ENCODE measurements at regions of chr7 and their contacts with region 1.

Region 1: DNA sequence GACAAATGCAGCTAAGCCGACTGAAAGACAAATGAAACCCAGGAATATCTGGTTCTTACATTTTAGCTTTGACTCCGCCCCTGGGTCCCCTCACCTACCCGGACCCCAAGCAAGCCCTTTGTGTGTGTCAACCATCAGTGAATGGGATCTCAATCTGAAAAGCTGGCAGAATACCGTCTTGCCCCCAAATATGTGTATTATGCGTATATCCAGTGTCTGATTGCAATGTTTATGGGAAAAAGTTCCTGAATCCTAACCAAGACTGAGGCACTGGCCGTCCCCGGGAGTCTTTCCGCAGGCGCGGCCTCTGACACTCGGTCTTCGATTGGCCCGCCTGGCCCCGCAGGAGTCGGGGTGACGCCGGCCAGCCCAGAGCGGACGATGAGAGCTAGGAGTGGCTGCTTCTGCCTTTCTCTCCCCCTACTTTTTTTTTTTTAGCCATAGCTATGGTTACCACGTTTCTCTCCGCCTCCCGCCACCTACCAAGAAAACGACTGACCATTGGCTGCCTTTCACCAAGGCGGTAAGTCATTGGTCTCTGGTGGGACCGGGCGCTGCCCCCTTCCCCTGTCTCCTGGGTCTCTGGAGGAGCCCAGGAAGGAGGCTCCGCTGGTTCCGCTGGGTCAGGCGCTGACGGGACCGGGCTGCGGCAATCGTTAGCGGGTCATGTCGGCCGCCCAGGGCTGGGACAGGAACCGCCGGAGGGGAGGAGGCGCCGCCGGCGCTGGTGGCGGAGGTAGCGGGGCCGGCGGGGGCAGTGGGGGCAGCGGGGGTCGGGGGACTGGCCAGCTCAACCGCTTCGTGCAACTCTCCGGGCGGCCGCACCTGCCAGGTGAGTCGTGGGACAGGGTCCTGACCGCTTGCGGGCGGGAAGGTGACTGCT is at the start of gene KLHDC10:
- DNase-seq: peak; percentile 99
- H3K4me3 ChIP-seq: peak within 1 kb of the TSS; percentile 68 to 94 (median 84)
- H3K27ac ChIP-seq: peak within 1 kb of the TSS; percentile 50
- H3K4me1 ChIP-seq: peaks cover 28% of the 10 kb centered on the region
- H3K27me3 ChIP-seq: no peaks in the 10 kb centered on the region
- CTCF ChIP-seq: no peak
- POLR2A ChIP-seq: peak; percentile 76
- total RNA-seq, gene KLHDC10: 28.6 and 31.3 TPM in 2 replicates

Region 2: DNA sequence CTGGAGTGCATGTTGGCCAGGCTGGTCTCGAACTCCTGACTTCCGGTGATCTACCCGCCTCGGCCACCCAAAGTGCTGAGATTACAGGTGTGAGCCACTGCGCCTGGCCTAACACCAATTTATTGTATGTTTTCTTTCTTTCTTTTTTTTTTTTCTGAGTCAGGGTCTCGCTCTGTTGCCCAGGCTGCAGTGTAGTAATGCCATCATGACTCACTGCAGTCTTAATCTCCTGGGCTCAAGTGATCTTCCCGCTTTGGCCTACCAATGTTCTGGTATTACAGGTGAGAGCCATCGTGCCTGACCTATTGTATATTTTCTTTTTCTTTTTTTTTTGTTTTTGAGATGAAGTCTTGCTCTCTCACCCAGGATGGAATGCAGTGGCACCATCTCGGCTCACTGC is 83.6 kb before region 1 on chr7:
- CTCF ChIA-PET with region 1: no interaction called
- POLR2A ChIA-PET with region 1: no interaction called
- dilution Hi-C with region 1: no loop called
- intact Hi-C with region 1: no loop called
- DNase-seq: no peak
- H3K4me3 ChIP-seq: no peak overlapping the region
- H3K27ac ChIP-seq: no peak overlapping the region
- H3K4me1 ChIP-seq: peaks cover 3% of the 10 kb centered on the region
- H3K27me3 ChIP-seq: no peaks in the 10 kb centered on the region
- CTCF ChIP-seq: no peak
- POLR2A ChIP-seq: no peak

Region 3: GRCh38 chr7:130021105-130021834 is 48.9 kb before region 1 on chr7:
- CTCF ChIA-PET with region 1: no interaction called
- POLR2A ChIA-PET with region 1: no interaction called
- dilution Hi-C with region 1: no loop called
- intact Hi-C with region 1: no loop called
- DNase-seq: no peak
- H3K4me3 ChIP-seq: no peak overlapping the region
- H3K27ac ChIP-seq: no peak overlapping the region
- H3K4me1 ChIP-seq: no peaks in the 10 kb centered on the region
- H3K27me3 ChIP-seq: no peaks in the 10 kb centered on the region
- CTCF ChIP-seq: no peak
- POLR2A ChIP-seq: no peak

Region 4: GRCh38 chr7:130084037-130084875 is 14.0 kb after region 1 on chr7:
- CTCF ChIA-PET with region 1: interaction called, 16 read pairs
- POLR2A ChIA-PET with region 1: no interaction called
- dilution Hi-C with region 1: no loop called
- intact Hi-C with region 1: no loop called
- DNase-seq: peak; percentile 14
- H3K4me3 ChIP-seq: no peak overlapping the region
- H3K27ac ChIP-seq: no peak overlapping the region
- H3K4me1 ChIP-seq: no peaks in the 10 kb centered on the region
- H3K27me3 ChIP-seq: no peaks in the 10 kb centered on the region
- CTCF ChIP-seq: peak; percentile 38 to 39
- POLR2A ChIP-seq: no peak

Region 5: DNA sequence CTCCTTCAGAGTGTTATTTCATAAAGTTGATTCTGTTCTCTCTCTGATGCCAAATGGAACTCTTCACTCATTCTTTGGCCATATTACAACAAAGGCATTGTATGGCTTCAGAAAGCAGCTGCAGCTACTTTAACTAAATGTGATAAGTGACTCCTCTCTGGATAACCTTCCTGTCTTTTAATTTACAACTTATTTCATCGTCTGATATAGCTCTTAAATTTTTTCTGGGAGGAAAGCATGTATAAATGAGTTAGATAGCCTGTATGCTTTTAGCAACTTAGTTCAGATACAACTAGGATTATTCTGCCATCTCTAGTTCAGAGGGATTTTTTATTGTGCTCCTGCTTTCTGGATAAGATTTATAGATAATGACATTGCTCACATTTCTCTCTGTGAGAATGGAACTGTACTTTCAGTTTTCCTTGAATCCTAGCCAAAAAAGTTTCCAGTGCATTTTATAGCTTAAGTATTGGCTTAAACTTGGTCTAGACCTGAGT is 57.6 kb after region 1 on chr7:
- CTCF ChIA-PET with region 1: interaction called, 13 read pairs
- POLR2A ChIA-PET with region 1: no interaction called
- dilution Hi-C with region 1: no loop called
- intact Hi-C with region 1: no loop called
- DNase-seq: peak; percentile 79
- H3K4me3 ChIP-seq: no peak overlapping the region
- H3K27ac ChIP-seq: no peak overlapping the region
- H3K4me1 ChIP-seq: no peaks in the 10 kb centered on the region
- H3K27me3 ChIP-seq: no peaks in the 10 kb centered on the region
- CTCF ChIP-seq: no peak
- POLR2A ChIP-seq: no peak

Region 6: GRCh38 chr7:130242198-130243014 is 172.2 kb after region 1 on chr7:
- CTCF ChIA-PET with region 1: interaction called, 23 read pairs
- POLR2A ChIA-PET with region 1: no interaction called
- dilution Hi-C with region 1: no loop called
- intact Hi-C with region 1: loop called (anchors 1 kb)
- DNase-seq: peak; percentile 50
- H3K4me3 ChIP-seq: no peak overlapping the region
- H3K27ac ChIP-seq: no peak overlapping the region
- H3K4me1 ChIP-seq: no peaks in the 10 kb centered on the region
- H3K27me3 ChIP-seq: peaks cover 0 to 2% of the 10 kb centered on the region in 2 experiments
- CTCF ChIP-seq: peak; percentile 80 to 92
- POLR2A ChIP-seq: no peak

Region 7: DNA sequence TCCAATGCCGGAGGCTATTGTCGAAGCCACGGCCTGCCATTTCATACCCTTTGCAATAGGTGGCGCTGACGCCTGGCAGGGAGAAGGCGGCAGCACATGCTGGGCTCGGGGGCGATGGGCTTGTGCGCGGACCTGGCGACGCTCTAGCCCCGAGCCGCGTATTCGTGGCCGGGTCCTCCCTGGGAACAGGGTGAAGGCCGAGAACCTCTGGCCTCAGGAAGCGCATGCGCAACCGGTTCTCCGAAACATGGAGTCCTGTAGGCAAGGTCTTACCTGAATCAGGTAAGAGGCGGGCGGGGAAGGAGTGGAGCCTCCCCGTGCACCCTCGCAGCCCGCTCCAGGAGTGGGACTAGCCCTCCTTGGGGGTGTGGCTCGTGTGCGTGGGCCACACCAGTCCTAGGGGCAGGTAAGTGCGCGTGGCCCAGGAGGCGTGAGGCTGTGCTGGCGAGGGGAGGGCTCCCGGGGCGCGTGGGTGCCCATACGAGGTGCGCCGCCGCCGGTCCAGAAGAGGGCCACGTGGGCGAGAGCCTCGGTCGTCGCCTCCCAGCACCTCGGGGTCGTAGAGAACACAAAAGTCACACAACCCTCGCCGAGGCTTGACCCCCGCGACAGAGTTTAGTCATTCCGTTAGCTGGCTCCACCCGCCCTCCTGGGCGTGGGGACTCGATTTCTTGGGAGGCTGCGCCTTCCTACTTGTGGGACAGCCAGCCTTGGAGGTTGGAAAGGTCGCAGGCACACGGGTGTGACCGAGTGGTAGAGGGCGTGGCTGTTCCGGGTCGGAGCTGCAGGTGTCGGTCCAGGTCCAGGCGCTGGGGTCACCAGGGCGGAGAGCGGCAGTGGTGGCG is 416.1 kb after region 1 on chr7:
- CTCF ChIA-PET with region 1: interaction called, 3 read pairs
- POLR2A ChIA-PET with region 1: no interaction called
- dilution Hi-C with region 1: no loop called
- intact Hi-C with region 1: loop called (anchors 2 kb)
- DNase-seq: peak; percentile 30
- H3K4me3 ChIP-seq: peak overlapping the region in 2 of 3 experiments; percentile 24 to 26
- H3K27ac ChIP-seq: no peak overlapping the region
- H3K4me1 ChIP-seq: peaks cover 34% of the 10 kb centered on the region
- H3K27me3 ChIP-seq: peaks cover 2 to 7% of the 10 kb centered on the region in 2 experiments
- CTCF ChIP-seq: peak; percentile 61 to 65
- POLR2A ChIP-seq: no peak

Region 8: GRCh38 chr7:130695840-130696239 is 625.6 kb after region 1 on chr7:
- CTCF ChIA-PET with region 1: interaction called, 3 read pairs
- POLR2A ChIA-PET with region 1: no interaction called
- dilution Hi-C with region 1: no loop called
- intact Hi-C with region 1: loop called (anchors 1 kb)
- DNase-seq: peak; percentile 41
- H3K4me3 ChIP-seq: no peak overlapping the region
- H3K27ac ChIP-seq: no peak overlapping the region
- H3K4me1 ChIP-seq: no peaks in the 10 kb centered on the region
- H3K27me3 ChIP-seq: peaks cover 0 to 7% of the 10 kb centered on the region in 2 experiments
- CTCF ChIP-seq: peak; percentile 36 to 52
- POLR2A ChIP-seq: no peak

Region 9: DNA sequence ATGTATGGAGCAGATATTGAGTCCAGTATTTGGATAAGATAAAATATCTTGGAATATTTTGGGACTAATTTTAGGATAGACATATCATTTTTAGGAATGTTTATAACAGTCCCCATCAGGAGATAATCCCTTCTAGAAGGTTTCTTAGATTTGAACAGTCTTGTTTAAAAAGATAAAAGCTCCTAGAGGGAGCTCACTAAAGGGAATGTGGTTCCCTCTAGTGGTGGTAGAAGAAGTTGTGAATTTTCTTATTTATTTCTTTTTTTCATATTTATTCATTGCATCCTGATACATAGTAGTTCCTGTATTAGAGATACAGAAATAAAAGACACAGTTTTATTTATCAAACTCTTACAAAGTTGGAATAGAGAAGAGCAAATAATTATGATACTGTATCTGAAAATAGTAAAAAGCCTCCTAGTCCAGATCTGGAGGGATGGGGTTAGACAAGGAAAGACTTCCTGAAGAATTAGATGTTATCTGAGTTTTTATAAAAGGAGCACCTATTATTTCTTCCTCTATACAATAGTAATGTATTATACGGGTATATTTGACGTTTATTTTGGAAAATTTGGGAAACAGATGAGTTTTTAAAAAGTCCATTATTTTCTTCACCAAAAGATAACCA is 688.3 kb after region 1 on chr7:
- CTCF ChIA-PET with region 1: interaction called, 127 read pairs
- POLR2A ChIA-PET with region 1: no interaction called
- dilution Hi-C with region 1: no loop called
- intact Hi-C with region 1: loop called (anchors 1 kb)
- DNase-seq: peak; percentile 58
- H3K4me3 ChIP-seq: no peak overlapping the region
- H3K27ac ChIP-seq: no peak overlapping the region
- H3K4me1 ChIP-seq: no peaks in the 10 kb centered on the region
- H3K27me3 ChIP-seq: peaks cover 11 to 17% of the 10 kb centered on the region in 2 experiments
- CTCF ChIP-seq: peak; percentile 40 to 45
- POLR2A ChIP-seq: no peak